ENCODE measurements at regions of chr15 and their contacts with region 1.

Region 1: DNA sequence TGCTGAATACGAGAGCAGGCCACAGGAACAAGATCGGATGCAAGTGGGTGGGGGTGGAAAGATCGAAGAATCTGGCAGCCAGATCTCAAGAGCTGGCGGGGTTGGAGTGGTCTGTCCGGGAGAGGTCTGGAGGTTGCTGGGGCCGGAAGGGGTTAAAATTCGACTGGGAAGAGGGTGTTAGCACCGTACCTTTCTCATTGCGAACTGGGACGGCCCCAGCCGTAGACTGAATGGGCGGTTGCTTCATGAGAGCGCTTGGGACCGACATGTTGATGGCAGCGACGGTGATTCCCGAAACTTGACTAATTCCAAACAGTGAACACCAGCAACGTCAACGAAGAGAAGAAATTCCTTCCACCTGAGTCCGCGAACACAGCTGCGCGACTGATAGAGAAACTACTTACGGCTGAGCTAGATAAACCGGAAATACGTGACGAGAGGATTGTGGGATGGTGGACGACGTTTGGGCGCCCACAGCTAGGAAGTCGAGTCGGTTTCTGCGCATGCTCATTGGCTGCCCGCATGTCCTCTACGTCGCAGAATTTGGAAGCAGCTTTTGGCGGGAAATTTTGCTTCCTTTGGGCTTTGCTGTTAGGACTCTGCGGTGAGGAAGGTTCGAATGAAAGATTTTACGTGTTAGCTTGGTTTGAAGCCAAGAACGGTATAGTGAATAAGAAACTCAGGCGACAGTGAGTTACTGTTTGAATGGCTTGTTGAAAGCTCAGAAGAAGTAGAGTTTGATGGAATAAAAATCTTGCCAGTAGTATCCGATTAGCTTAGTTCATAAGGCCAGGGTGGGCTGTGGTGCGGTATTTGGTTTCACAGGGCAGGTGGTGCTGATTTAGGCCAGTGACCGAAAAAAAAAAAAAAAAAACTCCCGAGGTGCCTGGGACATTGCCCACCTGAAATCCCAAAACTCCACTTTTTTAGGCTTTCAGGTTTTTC is at the start of gene MFAP1:
- DNase-seq: peak; percentile 94 to 96 (median 96)
- ATAC-seq: peak; percentile 95 to 98 (median 97)
- H3K4me3 ChIP-seq: peak within 1 kb of the TSS; percentile 61 to 98 (median 82)
- H3K27ac ChIP-seq: peak within 1 kb of the TSS; percentile 27 to 93 (median 86)
- H3K4me1 ChIP-seq: peaks cover 0 to 58% (median 38%) of the 10 kb centered on the region in 12 donors
- H3K27me3 ChIP-seq: no peaks in the 10 kb centered on the region
- CTCF ChIP-seq: no peak
- POLR2A ChIP-seq: peak in 1 of 2 donors; percentile 78
- total RNA-seq, gene MFAP1: 13.2 to 22.3 (median 20.2) TPM

Region 2: GRCh38 chr15:43769584-43770228 is 54.9 kb before region 1 on chr15:
- intact Hi-C with region 1: loop called in 1 of 10 experiments (anchors 10 kb)
- DNase-seq: peak in 2 of 5 donors; percentile 25 to 52
- ATAC-seq: peak in 3 of 4 donors; percentile 30 to 57 (median 43)
- H3K4me3 ChIP-seq: no peak overlapping the region
- H3K27ac ChIP-seq: no peak overlapping the region
- H3K4me1 ChIP-seq: peaks cover 0 to 20% (median 0%) of the 10 kb centered on the region in 12 donors
- H3K27me3 ChIP-seq: no peaks in the 10 kb centered on the region
- CTCF ChIP-seq: peak; percentile 61 to 90 (median 77)
- POLR2A ChIP-seq: no peak

Region 3: DNA sequence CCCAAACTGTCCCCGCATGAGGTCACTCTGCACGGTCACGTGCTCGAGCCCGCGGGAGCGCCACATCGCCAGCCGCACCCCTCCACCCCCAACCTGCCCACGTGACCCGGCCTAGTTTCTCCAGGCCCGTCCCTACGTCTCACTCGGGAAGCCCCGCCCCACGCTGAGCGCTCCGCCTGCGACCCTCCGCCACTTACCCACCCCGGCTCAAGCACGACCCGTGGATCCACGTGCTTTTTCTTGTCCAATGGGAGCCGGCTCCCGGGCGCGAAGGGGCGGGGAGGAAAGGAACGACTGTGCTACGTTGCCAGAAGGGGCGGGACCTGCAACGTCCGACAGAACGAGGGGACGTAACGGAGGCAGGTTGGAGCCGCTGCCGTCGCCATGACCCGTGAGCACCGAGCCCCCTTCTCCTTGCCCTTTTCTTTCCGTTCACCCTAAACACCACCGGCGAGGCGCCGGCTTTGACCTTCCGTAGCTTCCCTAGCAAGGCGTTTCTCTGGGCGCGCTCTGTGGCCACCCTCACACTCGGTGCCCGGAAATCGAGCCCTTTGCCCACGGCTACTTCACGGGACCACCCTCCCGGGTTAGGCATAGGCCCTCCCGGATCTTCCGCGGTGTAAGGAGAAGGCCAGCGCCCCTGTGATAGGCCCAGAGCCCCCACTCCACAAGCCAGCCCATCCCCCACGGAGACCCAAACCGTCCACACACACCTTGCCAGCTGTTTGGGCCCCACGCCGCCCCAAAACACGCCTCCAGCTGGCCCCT is 32.4 kb before region 1 on chr15 and contains the start of gene SERF2:
- intact Hi-C with region 1: loop called in 1 of 10 experiments (anchors 1 kb)
- DNase-seq: peak; percentile 100
- ATAC-seq: peak; percentile 96 to 98 (median 97)
- H3K4me3 ChIP-seq: peak within 1 kb of the TSS; percentile 60 to 100 (median 85)
- H3K27ac ChIP-seq: peak within 1 kb of the TSS; percentile 86 to 100 (median 96)
- H3K4me1 ChIP-seq: peaks cover 4 to 50% (median 36%) of the 10 kb centered on the region in 12 donors
- H3K27me3 ChIP-seq: no peaks in the 10 kb centered on the region
- CTCF ChIP-seq: no peak
- POLR2A ChIP-seq: peak; percentile 98
- total RNA-seq, gene SERF2: 705 to 1,199 (median 843) TPM

Region 4: DNA sequence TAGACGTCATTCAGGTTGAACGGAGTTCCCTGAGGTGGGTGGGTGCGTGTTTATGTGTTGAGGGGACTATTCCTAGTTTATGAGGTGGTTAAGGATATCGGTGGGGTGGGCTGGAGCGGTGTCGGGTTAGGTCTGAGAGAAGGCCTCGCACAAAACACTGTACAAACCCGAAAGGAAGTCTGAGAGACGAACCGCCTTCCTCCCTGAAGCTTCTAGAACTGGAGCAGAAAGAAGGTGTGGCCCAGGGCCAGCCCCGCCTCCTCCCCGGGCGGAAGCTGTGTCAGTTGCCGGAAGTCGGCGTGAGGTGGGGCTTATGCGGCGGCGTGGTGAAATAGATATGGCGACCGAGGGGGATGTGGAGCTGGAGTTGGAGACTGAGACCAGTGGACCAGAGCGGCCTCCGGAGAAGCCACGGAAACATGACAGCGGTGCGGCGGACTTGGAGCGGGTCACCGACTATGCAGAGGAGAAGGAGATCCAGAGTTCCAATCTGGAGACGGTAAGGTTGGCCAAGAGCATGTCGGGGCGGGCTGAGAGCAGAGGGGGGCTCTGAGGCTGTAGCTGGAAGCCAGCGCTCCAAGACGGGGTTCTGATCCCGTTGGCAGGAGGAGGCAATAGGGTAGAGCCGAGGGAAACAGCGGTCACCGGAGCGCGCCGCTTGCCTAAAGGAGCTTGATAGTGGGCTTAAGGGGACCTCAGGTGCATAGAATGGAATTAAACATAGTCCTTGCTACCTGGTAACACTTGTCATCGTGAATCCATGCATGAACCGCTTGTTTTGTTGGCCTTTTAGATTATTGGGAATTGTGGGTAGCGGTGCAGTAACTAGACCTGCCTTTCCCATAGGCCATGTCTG is 24.1 kb before region 1 on chr15 and contains the start of gene HYPK:
- intact Hi-C with region 1: loop called in 2 of 10 experiments (anchors 2 kb)
- DNase-seq: peak; percentile 94 to 96 (median 95)
- ATAC-seq: peak; percentile 90 to 97 (median 92)
- H3K4me3 ChIP-seq: peak within 1 kb of the TSS; percentile 64 to 94 (median 82)
- H3K27ac ChIP-seq: peak within 1 kb of the TSS; percentile 76 to 95 (median 90)
- H3K4me1 ChIP-seq: peaks cover under 1 to 50% (median 32%) of the 10 kb centered on the region in 12 donors
- H3K27me3 ChIP-seq: no peaks in the 10 kb centered on the region
- CTCF ChIP-seq: no peak
- POLR2A ChIP-seq: peak in 1 of 2 donors; percentile 52
- total RNA-seq, gene HYPK: 10.3 to 16.5 (median 13.6) TPM

Region 5: GRCh38 chr15:43886558-43886957 is 62.0 kb after region 1 on chr15:
- intact Hi-C with region 1: no loop called
- DNase-seq: peak in 2 of 5 donors; percentile 50 to 62
- ATAC-seq: peak in 2 of 4 donors; percentile 28 to 56
- H3K4me3 ChIP-seq: no peak overlapping the region
- H3K27ac ChIP-seq: no peak overlapping the region
- H3K4me1 ChIP-seq: peaks cover 0 to 28% (median 1%) of the 10 kb centered on the region in 12 donors
- H3K27me3 ChIP-seq: no peaks in the 10 kb centered on the region
- CTCF ChIP-seq: no peak
- POLR2A ChIP-seq: no peak

Region 6: DNA sequence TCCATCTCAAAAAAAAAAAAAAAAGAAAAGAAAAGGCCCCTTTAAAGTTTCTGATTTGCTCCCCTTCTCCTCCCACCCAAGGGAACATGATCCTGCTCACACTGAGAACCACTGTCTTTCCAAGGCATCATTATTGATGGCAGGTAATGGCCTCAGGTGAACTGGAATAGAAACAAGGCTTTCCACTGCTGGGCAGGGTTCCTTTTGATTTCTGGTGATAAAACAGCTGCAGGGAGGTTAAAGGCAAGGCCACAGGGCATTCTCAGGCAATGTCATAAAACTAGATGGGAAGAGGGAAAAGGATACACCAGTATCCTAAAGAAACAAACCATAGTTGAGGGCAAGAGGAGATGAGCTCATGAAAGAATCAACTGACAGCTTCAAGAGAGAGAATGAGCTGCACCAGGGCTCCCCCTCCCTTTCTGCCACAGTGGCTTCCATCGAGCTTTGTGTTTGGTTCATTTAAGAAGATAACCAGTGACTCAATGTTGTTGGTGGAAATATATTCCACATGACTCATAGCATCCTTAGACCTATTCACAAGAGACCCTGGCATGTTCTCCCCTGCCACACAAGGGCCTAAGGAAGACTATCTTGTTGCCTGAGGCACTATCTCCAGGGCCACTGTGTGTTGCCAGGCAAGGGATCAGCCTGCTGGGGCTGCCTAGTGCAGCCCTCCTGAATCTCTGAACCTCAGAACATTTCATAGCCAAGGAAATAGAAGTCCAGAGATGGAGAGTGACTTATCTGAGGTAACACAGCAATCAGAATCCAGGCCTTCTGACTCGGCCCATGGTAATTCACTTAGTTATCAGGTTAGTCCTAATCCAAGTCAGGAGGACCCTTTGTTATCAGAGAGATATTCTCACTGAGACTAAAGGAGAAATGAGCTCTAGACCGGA is 88.7 kb after region 1 on chr15:
- intact Hi-C with region 1: no loop called
- DNase-seq: peak in 4 of 5 donors; percentile 42 to 79 (median 56)
- ATAC-seq: peak; percentile 86 to 97 (median 94)
- H3K4me3 ChIP-seq: no peak overlapping the region
- H3K27ac ChIP-seq: peak overlapping the region in 10 of 12 donors; percentile 32 to 91 (median 74)
- H3K4me1 ChIP-seq: peaks cover 0 to 51% (median 15%) of the 10 kb centered on the region in 12 donors
- H3K27me3 ChIP-seq: no peaks in the 10 kb centered on the region
- CTCF ChIP-seq: no peak
- POLR2A ChIP-seq: no peak

Region 7: DNA sequence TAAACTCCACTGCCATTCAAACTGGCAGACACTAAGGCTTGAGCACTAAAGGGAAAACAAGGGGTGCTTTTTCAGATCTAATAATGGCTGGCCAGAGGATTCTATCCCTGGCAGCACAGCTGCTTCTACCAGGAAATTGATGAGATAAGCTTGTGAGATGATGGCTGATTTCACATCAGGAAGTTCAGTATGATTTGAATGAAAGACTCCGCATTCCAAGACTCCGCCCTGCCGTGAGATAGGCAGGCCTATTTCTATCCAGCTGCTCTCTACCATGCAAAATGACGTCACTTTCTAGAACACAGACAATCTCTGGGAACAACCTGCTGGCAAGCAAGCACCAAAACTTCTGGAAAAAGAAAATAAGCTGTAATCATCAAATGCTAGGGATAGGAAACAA is 174.0 kb after region 1 on chr15:
- intact Hi-C with region 1: no loop called
- DNase-seq: peak in 4 of 5 donors; percentile 31 to 62 (median 48)
- ATAC-seq: peak; percentile 76 to 96 (median 92)
- H3K4me3 ChIP-seq: peak overlapping the region in 5 of 12 donors; percentile 1 to 27 (median 15)
- H3K27ac ChIP-seq: peak overlapping the region in 9 of 12 donors; percentile 4 to 54 (median 36)
- H3K4me1 ChIP-seq: peaks cover 0 to 23% (median 11%) of the 10 kb centered on the region in 12 donors
- H3K27me3 ChIP-seq: no peaks in the 10 kb centered on the region
- CTCF ChIP-seq: no peak
- POLR2A ChIP-seq: no peak

Measured in heart left ventricle (tissue), 16 donors.